A549 (cell line): ENCODE measurements at regions of chr7 and their contacts with region 1.

Region 1: GRCh38 chr7:40604601-40605438 is 470.0 kb downstream of the SUGCT start:
- DNase-seq: peak; percentile 44 to 45
- ATAC-seq: peak; percentile 94 to 98
- H3K4me3 ChIP-seq: no peak overlapping the region
- H3K27ac ChIP-seq: no peak overlapping the region
- H3K4me1 ChIP-seq: no peaks in the 10 kb centered on the region
- CTCF ChIP-seq: peak; percentile 51
- EP300 ChIP-seq: no peak
- POLR2A ChIP-seq: no peak
- RAD21 ChIP-seq: peak; percentile 52 to 54; a peak in 4 of 5 replicates

Region 2: DNA sequence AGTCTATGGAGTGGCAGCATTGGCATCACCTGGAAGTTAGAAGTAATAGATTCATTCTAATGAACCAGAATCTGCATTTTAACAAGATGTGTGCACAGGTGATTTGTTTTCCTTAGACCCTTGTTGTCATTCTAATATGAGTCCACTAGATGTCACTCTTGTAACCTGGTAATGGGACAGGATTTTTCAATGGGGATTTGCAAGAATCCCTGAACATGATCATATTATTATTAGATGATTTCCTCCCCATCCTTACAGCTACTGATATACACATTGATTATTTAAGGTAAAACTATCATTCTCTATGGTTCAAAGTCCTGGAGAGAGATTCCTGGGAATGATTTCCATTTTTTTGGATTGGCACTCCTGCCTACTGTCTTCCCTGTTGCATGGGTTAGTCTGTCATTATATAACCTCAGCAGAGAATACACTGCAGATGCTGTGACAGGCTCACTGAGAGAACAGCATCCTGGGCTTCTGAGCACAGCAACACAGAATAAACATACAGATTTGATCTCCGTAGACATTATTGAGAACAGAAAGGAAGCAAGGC is 275.1 kb before region 1 on chr7:
- CTCF ChIA-PET with region 1: interaction called, 13 read pairs
- POLR2A ChIA-PET with region 1: no interaction called
- DNase-seq: peak; percentile 53
- ATAC-seq: peak; percentile 50 to 66; a peak in 3 of 6 replicates
- H3K4me3 ChIP-seq: no peak overlapping the region
- H3K27ac ChIP-seq: no peak overlapping the region
- H3K4me1 ChIP-seq: no peaks in the 10 kb centered on the region
- CTCF ChIP-seq: peak; percentile 73
- EP300 ChIP-seq: no peak
- POLR2A ChIP-seq: no peak
- RAD21 ChIP-seq: peak; percentile 77 to 78

Region 3: DNA sequence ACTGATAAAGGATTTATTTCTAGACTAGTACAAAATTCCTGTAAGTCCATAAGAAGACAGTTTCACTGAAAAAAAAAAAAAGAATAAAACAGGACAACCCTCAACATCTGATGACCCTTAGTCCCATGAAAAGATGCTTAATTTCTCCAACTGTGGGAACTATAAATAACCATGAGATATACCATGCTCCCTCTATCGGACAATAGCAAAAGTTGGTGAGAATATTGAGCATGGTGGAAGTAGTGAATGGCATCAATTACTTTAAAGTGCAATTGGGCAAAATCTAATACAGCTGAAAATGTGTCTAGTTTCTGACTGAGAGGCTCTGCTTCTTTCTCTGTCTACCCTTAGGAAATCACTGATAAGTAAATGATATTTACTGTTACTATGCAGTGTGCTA is 121.2 kb before region 1 on chr7:
- CTCF ChIA-PET with region 1: no interaction called
- POLR2A ChIA-PET with region 1: no interaction called
- DNase-seq: peak in 1 of 2 experiments; percentile 2
- ATAC-seq: peak in 1 of 2 experiments; percentile 42; a peak in 2 of 6 replicates
- H3K4me3 ChIP-seq: no peak overlapping the region
- H3K27ac ChIP-seq: no peak overlapping the region
- H3K4me1 ChIP-seq: no peaks in the 10 kb centered on the region
- CTCF ChIP-seq: no peak
- EP300 ChIP-seq: no peak
- POLR2A ChIP-seq: no peak
- RAD21 ChIP-seq: no peak